Endothelial cell of umbilical vein (primary cell): ENCODE measurements at regions of chr11 and their contacts with region 1.

Region 1: DNA sequence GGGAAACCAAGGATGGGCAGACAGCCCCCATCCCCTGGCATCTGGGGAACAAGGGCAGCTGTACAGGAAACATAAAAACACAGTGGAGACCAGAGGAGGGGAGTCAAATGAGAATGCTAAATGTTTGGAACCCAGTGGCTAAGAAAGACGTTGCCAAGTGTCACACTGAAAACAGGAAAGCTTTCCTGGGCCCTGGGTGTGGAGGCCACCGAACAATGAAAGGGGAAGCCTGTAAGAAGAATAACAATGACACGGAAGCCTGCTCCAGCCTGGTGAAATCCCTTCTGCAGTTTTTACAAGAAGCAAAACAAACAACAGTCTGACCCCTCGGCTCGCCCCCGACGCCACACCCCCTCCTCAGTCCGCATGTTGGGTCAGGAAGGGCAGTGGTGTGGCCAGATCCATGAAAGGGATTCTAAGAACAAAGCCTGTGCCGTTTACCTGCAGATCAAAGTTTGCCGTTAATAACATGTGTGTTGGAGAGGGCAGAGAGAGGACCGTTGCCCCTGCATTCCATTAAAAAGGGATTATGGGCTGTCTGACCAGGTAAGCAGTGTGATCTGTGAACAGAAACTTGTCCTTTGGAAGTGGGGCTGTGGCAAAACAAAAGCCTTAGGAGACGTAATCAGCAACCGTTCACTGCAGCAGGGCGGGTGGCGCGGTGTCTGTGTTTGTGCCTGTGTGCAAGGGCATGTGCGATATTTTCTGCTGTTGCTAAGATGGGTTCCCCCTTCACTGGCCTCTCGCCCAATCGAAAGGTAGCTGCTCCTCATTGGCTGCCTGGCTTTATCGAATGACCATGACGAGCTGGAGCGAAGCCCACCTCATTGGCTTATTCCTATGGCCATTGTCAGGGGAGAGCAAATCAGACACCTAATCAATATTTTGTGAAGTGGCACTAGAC is 113.7 kb upstream of the BLID start:
- DNase-seq: peak; percentile 89
- H3K4me3 ChIP-seq: peak overlapping the region in 2 of 3 experiments; percentile 2 to 43
- H3K27ac ChIP-seq: peak overlapping the region; percentile 88
- H3K4me1 ChIP-seq: peaks cover 23% of the 10 kb centered on the region
- H3K27me3 ChIP-seq: no peaks in the 10 kb centered on the region
- CTCF ChIP-seq: no peak
- POLR2A ChIP-seq: peak; percentile 57

Region 2: DNA sequence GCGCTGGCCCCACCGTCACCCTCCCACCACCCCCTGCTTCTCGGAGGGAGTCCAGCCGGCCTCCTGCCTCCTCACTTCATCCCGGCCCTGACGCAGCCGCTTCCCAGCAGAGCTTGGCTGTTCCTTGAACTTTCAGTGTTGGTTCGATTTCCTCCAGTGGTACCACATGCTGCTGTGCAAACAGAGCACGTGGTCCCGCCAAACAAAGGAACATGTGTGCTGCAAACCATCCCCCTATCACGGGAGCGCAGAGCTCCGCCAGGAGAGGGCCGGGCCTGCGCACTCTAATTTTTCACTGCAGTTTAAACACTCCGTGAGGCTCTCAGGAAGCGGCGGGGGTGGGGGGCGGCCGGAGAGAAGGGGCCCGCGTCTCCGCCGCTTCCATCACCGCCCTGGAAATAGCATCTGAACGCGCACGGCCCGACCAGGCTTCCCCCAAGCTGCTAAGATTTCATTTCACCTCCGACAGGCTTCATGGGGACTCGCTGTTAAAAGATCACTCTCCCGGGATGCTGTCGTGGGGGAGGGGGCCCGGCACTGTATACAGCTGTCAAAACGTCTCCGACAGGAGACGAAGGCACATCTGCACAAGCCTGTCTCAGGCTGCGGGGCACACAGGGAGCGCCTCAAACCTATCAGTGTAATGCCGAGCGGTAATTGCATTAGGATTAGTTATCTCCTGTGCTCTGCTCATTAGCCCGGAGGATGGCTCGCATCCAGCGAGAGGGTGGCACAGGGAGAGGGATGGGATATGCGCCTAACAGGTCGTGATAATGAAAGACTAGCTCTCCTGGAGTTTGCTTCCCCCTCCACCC is 507.1 kb before region 1 on chr11:
- CTCF ChIA-PET with region 1: no interaction called
- POLR2A ChIA-PET with region 1: no interaction called
- dilution Hi-C with region 1: no loop called
- intact Hi-C with region 1: loop called (anchors 1 kb)
- DNase-seq: peak; percentile 94
- H3K4me3 ChIP-seq: peak overlapping the region; percentile 21 to 59 (median 31)
- H3K27ac ChIP-seq: peak overlapping the region; percentile 59
- H3K4me1 ChIP-seq: peaks cover 25% of the 10 kb centered on the region
- H3K27me3 ChIP-seq: peaks cover 3 to 5% of the 10 kb centered on the region in 2 experiments
- CTCF ChIP-seq: no peak
- POLR2A ChIP-seq: no peak

Region 3: GRCh38 chr11:122045181-122045586 is 184.5 kb before region 1 on chr11:
- CTCF ChIA-PET with region 1: no interaction called
- POLR2A ChIA-PET with region 1: no interaction called
- dilution Hi-C with region 1: no loop called
- intact Hi-C with region 1: loop called (anchors 1 kb)
- DNase-seq: peak; percentile 92
- H3K4me3 ChIP-seq: no peak overlapping the region
- H3K27ac ChIP-seq: peak overlapping the region; percentile 82
- H3K4me1 ChIP-seq: peaks cover 32% of the 10 kb centered on the region
- H3K27me3 ChIP-seq: no peaks in the 10 kb centered on the region
- CTCF ChIP-seq: no peak
- POLR2A ChIP-seq: no peak

Region 4: GRCh38 chr11:122197055-122197987 is 32.4 kb before region 1 on chr11:
- CTCF ChIA-PET with region 1: no interaction called
- POLR2A ChIA-PET with region 1: no interaction called
- dilution Hi-C with region 1: no loop called
- intact Hi-C with region 1: loop called (anchors 1 kb)
- DNase-seq: peak; percentile 96
- H3K4me3 ChIP-seq: peak overlapping the region in 1 of 3 experiments; percentile 26
- H3K27ac ChIP-seq: peak overlapping the region; percentile 95
- H3K4me1 ChIP-seq: peaks cover 69% of the 10 kb centered on the region
- H3K27me3 ChIP-seq: no peaks in the 10 kb centered on the region
- CTCF ChIP-seq: no peak
- POLR2A ChIP-seq: peak; percentile 82

Region 5: GRCh38 chr11:122242731-122243130 is 13.0 kb after region 1 on chr11:
- CTCF ChIA-PET with region 1: no interaction called
- POLR2A ChIA-PET with region 1: no interaction called
- dilution Hi-C with region 1: no loop called
- intact Hi-C with region 1: loop called (anchors 1 kb)
- DNase-seq: peak; percentile 55
- H3K4me3 ChIP-seq: no peak overlapping the region
- H3K27ac ChIP-seq: no peak overlapping the region
- H3K4me1 ChIP-seq: no peaks in the 10 kb centered on the region
- H3K27me3 ChIP-seq: no peaks in the 10 kb centered on the region
- CTCF ChIP-seq: no peak
- POLR2A ChIP-seq: no peak

Region 6: DNA sequence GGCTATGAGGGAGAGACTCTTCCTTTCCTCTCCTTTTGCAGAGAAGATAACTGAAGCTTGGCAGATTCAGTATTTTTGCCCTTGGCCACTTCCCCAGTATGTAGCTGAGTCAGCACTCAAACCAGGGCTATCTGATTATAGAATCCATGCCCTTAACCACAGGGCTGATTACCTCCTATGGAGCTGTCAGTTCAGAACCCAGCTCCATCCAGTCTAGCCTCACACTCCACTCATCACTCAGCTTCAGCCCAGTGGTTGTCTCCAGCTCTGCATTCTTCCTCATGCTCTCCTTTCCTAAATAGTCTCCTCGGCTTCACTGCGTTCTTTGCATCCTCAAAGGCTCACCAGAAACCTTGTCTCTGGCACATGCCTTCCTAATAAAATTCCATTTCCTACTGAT is 37.9 kb after region 1 on chr11:
- CTCF ChIA-PET with region 1: no interaction called
- POLR2A ChIA-PET with region 1: no interaction called
- dilution Hi-C with region 1: no loop called
- intact Hi-C with region 1: no loop called
- DNase-seq: no peak
- H3K4me3 ChIP-seq: no peak overlapping the region
- H3K27ac ChIP-seq: no peak overlapping the region
- H3K4me1 ChIP-seq: no peaks in the 10 kb centered on the region
- H3K27me3 ChIP-seq: no peaks in the 10 kb centered on the region
- CTCF ChIP-seq: no peak
- POLR2A ChIP-seq: no peak

Region 7: DNA sequence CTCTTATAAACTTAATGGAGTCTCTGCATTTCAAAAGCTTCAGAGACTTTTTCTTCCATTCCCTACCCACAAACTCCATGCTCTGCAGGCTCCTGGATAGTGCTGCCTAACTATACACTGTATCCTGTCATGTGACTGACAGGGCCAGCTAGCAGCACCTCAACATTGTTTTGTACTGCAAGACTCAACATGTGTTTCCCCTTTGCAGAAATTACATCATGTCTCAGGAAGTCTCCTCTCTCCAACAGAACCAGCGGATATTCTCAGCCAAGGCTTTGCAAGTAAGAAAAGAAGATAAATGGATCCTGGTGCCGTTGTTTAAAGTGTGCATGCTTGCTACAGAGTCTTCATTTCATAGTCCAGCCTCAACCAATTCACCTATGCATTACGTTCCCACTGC is 261.8 kb after region 1 on chr11:
- CTCF ChIA-PET with region 1: no interaction called
- POLR2A ChIA-PET with region 1: no interaction called
- dilution Hi-C with region 1: no loop called
- intact Hi-C with region 1: loop called (anchors 1 kb)
- DNase-seq: peak; percentile 93
- H3K4me3 ChIP-seq: no peak overlapping the region
- H3K27ac ChIP-seq: peak overlapping the region; percentile 40
- H3K4me1 ChIP-seq: peaks cover 7% of the 10 kb centered on the region
- H3K27me3 ChIP-seq: peaks cover 3 to 6% of the 10 kb centered on the region in 2 experiments
- CTCF ChIP-seq: no peak
- POLR2A ChIP-seq: no peak